PC-3 (cell line): ENCODE measurements at regions of chr6 and their contacts with region 1.

Region 1: GRCh38 chr6:116217069-116217468 is 36.8 kb downstream of the TSPYL4 start:
- DNase-seq: peak; percentile 61
- ATAC-seq: no peak; the same call in 1 of the 2 replicates
- H3K4me3 ChIP-seq: no peak overlapping the region
- H3K27ac ChIP-seq: no peak overlapping the region
- H3K4me1 ChIP-seq: peaks cover 11% of the 10 kb centered on the region
- H3K27me3 ChIP-seq: no peaks in the 10 kb centered on the region
- CTCF ChIP-seq: peak; percentile 61

Region 2: DNA sequence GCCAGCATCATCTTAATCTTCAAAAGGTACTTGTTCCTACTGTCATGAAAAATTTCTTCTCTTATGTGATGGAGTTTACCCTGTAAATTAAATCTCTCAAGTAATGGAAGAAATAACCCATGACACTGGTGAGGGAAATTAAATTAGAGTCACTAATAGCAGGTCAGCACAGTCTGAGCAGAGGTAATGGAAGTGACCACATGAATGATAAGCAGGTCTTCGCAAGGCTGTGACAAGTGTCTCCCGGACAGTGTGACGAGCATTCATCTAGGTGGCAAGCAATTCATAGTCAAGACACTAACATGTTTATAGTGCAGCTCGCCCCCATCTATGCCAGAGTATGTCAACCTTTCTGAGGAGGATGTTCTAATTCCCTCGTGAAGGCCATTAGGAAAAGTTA is 405.5 kb before region 1 on chr6:
- CTCF ChIA-PET with region 1: no interaction called
- POLR2A ChIA-PET with region 1: no interaction called
- intact Hi-C with region 1: no loop called
- DNase-seq: no peak
- ATAC-seq: no peak
- H3K4me3 ChIP-seq: no peak overlapping the region
- H3K27ac ChIP-seq: no peak overlapping the region
- H3K4me1 ChIP-seq: no peaks in the 10 kb centered on the region
- H3K27me3 ChIP-seq: peaks cover 22% of the 10 kb centered on the region
- CTCF ChIP-seq: no peak

Region 3: GRCh38 chr6:116115781-116116180 is 101.3 kb before region 1 on chr6:
- CTCF ChIA-PET with region 1: no interaction called
- POLR2A ChIA-PET with region 1: no interaction called
- intact Hi-C with region 1: loop called (anchors 1 kb)
- DNase-seq: peak; percentile 6
- ATAC-seq: no peak
- H3K4me3 ChIP-seq: no peak overlapping the region
- H3K27ac ChIP-seq: no peak overlapping the region
- H3K4me1 ChIP-seq: no peaks in the 10 kb centered on the region
- H3K27me3 ChIP-seq: no peaks in the 10 kb centered on the region
- CTCF ChIP-seq: peak; percentile 57

Region 4: GRCh38 chr6:116279260-116280063 is 62.4 kb after region 1 on chr6 and contains the start of gene TSPYL1:
- CTCF ChIA-PET with region 1: no interaction called
- POLR2A ChIA-PET with region 1: no interaction called
- intact Hi-C with region 1: loop called (anchors 5 kb)
- DNase-seq: peak; percentile 95
- ATAC-seq: peak; percentile 94
- H3K4me3 ChIP-seq: peak within 1 kb of the TSS; percentile 99
- H3K27ac ChIP-seq: peak within 1 kb of the TSS; percentile 77
- H3K4me1 ChIP-seq: peaks cover 9% of the 10 kb centered on the region
- H3K27me3 ChIP-seq: no peaks in the 10 kb centered on the region
- CTCF ChIP-seq: 0 out of 2 replicates have a peak, but pooled peaks have one; percentile 21
- total RNA-seq, gene TSPYL1: 35.1 and 38.8 TPM in 2 replicates

Region 5: DNA sequence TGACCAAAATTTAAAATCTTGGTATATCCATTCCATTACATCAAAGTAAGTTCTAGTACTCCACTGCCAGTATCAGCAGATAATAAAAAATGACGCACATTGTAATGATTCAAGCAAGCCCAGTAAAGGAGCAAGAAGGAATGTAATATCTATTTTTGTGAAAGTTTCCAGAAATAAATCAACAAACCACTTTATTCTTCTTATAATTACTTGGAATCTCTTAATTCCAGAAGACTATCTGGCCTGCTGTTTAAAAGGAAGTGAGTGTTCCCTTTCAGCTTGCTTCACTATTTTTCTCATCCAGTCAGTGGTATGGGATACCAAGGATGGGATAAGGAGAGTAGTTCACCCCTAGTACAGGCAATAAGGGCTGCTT is 111.4 kb after region 1 on chr6:
- CTCF ChIA-PET with region 1: no interaction called
- POLR2A ChIA-PET with region 1: no interaction called
- intact Hi-C with region 1: no loop called
- DNase-seq: no peak
- ATAC-seq: no peak
- H3K4me3 ChIP-seq: no peak overlapping the region
- H3K27ac ChIP-seq: no peak overlapping the region
- H3K4me1 ChIP-seq: no peaks in the 10 kb centered on the region
- H3K27me3 ChIP-seq: no peaks in the 10 kb centered on the region
- CTCF ChIP-seq: no peak

Region 6: GRCh38 chr6:116605935-116606334 is 388.9 kb after region 1 on chr6:
- CTCF ChIA-PET with region 1: no interaction called
- POLR2A ChIA-PET with region 1: no interaction called
- intact Hi-C with region 1: no loop called
- DNase-seq: no peak
- ATAC-seq: no peak
- H3K4me3 ChIP-seq: no peak overlapping the region
- H3K27ac ChIP-seq: no peak overlapping the region
- H3K4me1 ChIP-seq: no peaks in the 10 kb centered on the region
- H3K27me3 ChIP-seq: no peaks in the 10 kb centered on the region
- CTCF ChIP-seq: no peak